ENCODE measurements at regions of chr3 and their contacts with region 1.

Region 1: DNA sequence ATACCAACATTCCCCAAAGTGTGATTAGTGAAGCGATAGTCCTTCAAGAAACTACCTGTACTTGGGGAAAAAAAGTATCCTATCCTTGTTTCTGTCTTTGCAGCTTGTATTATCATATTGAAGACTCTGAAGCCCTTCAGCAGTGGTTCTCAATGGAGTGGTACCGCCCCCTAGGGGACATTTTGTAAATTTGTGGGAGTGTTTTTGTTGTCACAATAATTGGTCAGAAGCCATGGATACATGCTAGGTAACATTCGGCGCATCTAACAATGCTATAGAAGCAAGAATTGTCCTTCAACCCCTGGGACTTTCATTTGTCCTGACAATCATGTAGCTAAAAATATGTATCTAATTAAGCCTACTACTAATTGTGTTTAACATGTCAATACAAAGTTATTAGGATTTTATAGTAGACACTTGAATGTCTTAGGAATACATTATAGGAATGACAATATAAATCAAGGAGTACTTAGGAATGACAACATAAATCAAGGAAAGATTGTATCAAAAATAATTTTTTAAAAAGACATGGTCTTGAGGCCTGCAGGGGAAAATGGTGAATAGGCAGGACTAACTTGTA is 53.7 kb downstream of the NMD3 start:
- DNase-seq: peak; percentile 66
- H3K4me3 ChIP-seq: no peak overlapping the region
- H3K27ac ChIP-seq: no peak overlapping the region
- H3K4me1 ChIP-seq: no peaks in the 10 kb centered on the region
- CTCF ChIP-seq: peak; percentile 94

Region 2: GRCh38 chr3:160707187-160707794 is 567.5 kb before region 1 on chr3:
- CTCF ChIA-PET with region 1: no interaction called
- POLR2A ChIA-PET with region 1: no interaction called
- intact Hi-C with region 1: loop called (anchors 2 kb)
- DNase-seq: peak; percentile 58
- H3K4me3 ChIP-seq: no peak overlapping the region
- H3K27ac ChIP-seq: no peak overlapping the region
- H3K4me1 ChIP-seq: no peaks in the 10 kb centered on the region
- CTCF ChIP-seq: peak; percentile 77

Region 3: GRCh38 chr3:160941885-160942494 is 332.8 kb before region 1 on chr3:
- CTCF ChIA-PET with region 1: no interaction called
- POLR2A ChIA-PET with region 1: no interaction called
- intact Hi-C with region 1: loop called (anchors 5 kb)
- DNase-seq: peak; percentile 64
- H3K4me3 ChIP-seq: no peak overlapping the region
- H3K27ac ChIP-seq: no peak overlapping the region
- H3K4me1 ChIP-seq: no peaks in the 10 kb centered on the region
- CTCF ChIP-seq: peak; percentile 90

Region 4: GRCh38 chr3:161096771-161097355 is 177.9 kb before region 1 on chr3:
- CTCF ChIA-PET with region 1: no interaction called
- POLR2A ChIA-PET with region 1: no interaction called
- intact Hi-C with region 1: loop called (anchors 5 kb)
- DNase-seq: peak; percentile 62
- H3K4me3 ChIP-seq: no peak overlapping the region
- H3K27ac ChIP-seq: no peak overlapping the region
- H3K4me1 ChIP-seq: peaks cover 4% of the 10 kb centered on the region
- CTCF ChIP-seq: peak; percentile 84

Region 5: DNA sequence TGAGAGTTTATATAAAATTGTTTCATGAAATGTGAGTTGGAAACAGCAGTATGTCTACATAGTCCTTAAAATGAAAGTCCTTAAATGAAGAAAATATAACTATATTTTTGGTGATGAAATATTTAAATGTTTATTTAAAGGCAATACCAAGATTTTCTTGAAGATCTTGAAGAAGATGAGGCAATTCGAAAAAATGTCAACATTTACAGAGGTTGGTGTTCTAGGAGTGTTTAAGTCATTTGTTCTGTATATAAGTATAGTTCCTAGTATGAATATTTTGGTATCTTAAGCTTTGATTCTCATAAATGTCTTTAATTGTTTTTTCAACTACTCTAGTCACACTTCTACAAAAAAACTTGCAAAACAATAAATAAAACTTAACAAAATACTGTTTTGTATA is 24.7 kb before region 1 on chr3:
- CTCF ChIA-PET with region 1: no interaction called
- POLR2A ChIA-PET with region 1: no interaction called
- intact Hi-C with region 1: no loop called
- DNase-seq: no peak
- H3K4me3 ChIP-seq: no peak overlapping the region
- H3K27ac ChIP-seq: no peak overlapping the region
- H3K4me1 ChIP-seq: no peaks in the 10 kb centered on the region
- CTCF ChIP-seq: no peak

Region 6: DNA sequence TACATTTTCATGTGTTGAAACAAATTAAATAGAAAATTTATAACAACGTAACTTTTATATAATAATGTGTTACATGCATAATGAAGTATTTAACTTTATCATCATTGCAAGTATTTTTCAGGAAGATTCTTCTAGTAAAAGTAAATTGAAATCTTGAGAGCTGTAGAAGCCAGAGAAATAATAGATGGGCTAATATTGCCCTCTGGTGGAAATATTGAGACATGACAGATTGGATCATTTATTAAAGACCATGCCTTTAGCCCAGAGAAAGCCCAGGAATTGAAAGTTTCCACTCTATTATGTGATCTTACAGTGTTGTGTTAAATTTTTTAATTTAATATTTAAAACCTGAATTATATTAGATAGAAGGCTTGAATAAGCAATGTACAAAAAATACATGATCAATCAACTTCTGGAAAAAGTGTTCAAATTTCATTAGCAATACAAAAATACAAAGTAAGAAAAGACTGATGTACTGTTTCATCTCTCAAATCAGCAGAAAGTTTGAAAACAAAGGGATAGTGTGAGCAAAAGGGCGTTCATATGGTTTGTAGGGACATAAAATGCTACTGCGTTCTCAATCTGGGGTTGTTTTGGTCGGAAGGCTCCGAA is 149.2 kb after region 1 on chr3:
- CTCF ChIA-PET with region 1: no interaction called
- POLR2A ChIA-PET with region 1: no interaction called
- intact Hi-C with region 1: loop called (anchors 2 kb)
- DNase-seq: peak; percentile 38
- H3K4me3 ChIP-seq: no peak overlapping the region
- H3K27ac ChIP-seq: no peak overlapping the region
- H3K4me1 ChIP-seq: no peaks in the 10 kb centered on the region
- CTCF ChIP-seq: peak; percentile 89

Region 7: DNA sequence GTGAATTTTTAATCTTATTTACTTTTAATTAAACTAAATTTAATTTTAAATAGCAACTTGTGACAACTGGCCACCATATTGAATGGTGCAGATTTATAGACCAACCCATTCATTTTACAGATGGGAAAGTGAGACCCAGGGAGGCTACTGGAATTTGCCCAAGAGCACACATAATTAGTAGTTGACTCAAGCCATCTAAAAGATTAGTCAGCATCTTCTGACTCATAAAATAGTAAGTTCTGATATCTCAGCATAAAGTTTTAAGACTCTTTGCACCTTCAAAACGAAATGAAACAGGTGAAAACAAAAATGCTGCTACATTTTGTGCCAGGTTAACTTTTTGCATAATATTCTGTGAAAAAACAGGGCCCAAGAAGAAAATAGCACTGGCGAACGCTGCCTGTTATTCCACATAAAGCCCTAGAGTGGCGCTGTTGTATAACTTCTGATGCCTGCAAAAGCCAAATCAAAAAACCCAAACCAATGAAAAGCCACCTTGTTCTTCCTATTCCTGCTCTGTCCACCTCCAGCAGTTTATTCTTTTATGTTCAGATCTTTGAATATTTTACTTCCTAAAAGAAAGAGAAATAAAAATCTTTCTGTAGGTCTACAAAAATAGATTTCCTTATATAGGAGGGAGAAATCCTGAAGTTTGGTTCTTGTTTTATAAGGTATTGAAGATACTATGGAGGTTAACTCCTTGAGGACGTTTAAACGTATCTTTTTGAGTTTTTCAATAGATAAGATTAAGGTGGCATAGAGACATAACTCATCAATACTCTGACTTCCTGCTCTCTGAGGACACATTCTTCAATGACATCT is 284.6 kb after region 1 on chr3:
- CTCF ChIA-PET with region 1: no interaction called
- POLR2A ChIA-PET with region 1: no interaction called
- intact Hi-C with region 1: no loop called
- DNase-seq: peak; percentile 52
- H3K4me3 ChIP-seq: no peak overlapping the region
- H3K27ac ChIP-seq: no peak overlapping the region
- H3K4me1 ChIP-seq: no peaks in the 10 kb centered on the region
- CTCF ChIP-seq: peak; percentile 93

Region 8: GRCh38 chr3:162041622-162042021 is 766.8 kb after region 1 on chr3:
- CTCF ChIA-PET with region 1: no interaction called
- POLR2A ChIA-PET with region 1: no interaction called
- intact Hi-C with region 1: no loop called
- DNase-seq: no peak
- H3K4me3 ChIP-seq: no peak overlapping the region
- H3K27ac ChIP-seq: no peak overlapping the region
- H3K4me1 ChIP-seq: no peaks in the 10 kb centered on the region
- CTCF ChIP-seq: no peak

Measured in OCI-LY7 (cell line).